Endothelial cell of umbilical vein (primary cell): ENCODE measurements at regions of chr21 and their contacts with region 1.

Region 1: GRCh38 chr21:32727687-32728455 is at the start of gene SYNJ1:
- DNase-seq: peak; percentile 98
- H3K4me3 ChIP-seq: peak within 1 kb of the TSS; percentile 45 to 87 (median 85)
- H3K27ac ChIP-seq: peak within 1 kb of the TSS; percentile 50
- H3K4me1 ChIP-seq: peaks cover 13% of the 10 kb centered on the region
- H3K27me3 ChIP-seq: no peaks in the 10 kb centered on the region
- CTCF ChIP-seq: no peak
- POLR2A ChIP-seq: peak; percentile 75
- total RNA-seq, gene SYNJ1: 17.0 and 18.3 TPM in 2 replicates

Region 2: GRCh38 chr21:32612075-32612998 is 115.5 kb before region 1 on chr21 and contains the start of gene CFAP298:
- CTCF ChIA-PET with region 1: interaction called, 7 read pairs
- POLR2A ChIA-PET with region 1: no interaction called
- dilution Hi-C with region 1: no loop called
- intact Hi-C with region 1: loop called (anchors 5 kb)
- DNase-seq: peak; percentile 92
- H3K4me3 ChIP-seq: peak within 1 kb of the TSS; percentile 74 to 99 (median 95)
- H3K27ac ChIP-seq: peak within 1 kb of the TSS; percentile 79
- H3K4me1 ChIP-seq: peaks cover 10% of the 10 kb centered on the region
- H3K27me3 ChIP-seq: no peaks in the 10 kb centered on the region
- CTCF ChIP-seq: no peak
- POLR2A ChIP-seq: peak; percentile 91
- total RNA-seq, gene CFAP298: 36.0 and 44.1 TPM in 2 replicates

Region 3: DNA sequence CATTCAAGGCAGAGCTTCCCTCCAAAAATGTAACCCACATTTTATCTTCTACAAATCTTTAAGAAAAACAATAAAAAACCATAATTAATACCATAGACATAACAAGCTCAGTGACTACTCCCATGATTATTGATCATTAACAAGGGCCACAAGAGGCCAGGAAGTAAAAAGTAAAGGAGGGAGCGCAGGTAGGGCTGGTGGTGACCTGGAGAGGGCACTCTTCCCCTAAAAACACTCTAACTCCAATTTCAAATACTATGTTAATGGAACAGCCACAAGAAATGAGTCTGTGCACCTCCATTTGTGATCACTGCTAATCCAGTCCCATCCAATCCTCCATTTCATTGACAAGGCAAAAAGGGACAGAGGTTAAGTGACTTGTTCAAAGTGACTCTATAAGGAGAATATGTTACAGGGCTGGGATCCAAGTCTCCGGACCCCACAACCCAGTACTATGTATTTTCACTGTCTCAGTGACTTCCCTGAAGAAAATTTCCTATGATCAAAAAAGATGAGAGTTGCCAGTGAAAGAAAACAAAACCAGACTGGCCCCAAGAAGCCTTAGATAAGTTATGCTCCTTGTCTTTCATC is 74.5 kb before region 1 on chr21:
- CTCF ChIA-PET with region 1: interaction called, 5 read pairs
- POLR2A ChIA-PET with region 1: no interaction called
- dilution Hi-C with region 1: no loop called
- intact Hi-C with region 1: loop called (anchors 1 kb)
- DNase-seq: peak; percentile 59
- H3K4me3 ChIP-seq: no peak overlapping the region
- H3K27ac ChIP-seq: no peak overlapping the region
- H3K4me1 ChIP-seq: no peaks in the 10 kb centered on the region
- H3K27me3 ChIP-seq: no peaks in the 10 kb centered on the region
- CTCF ChIP-seq: peak; percentile 54 to 69
- POLR2A ChIP-seq: no peak

Region 4: DNA sequence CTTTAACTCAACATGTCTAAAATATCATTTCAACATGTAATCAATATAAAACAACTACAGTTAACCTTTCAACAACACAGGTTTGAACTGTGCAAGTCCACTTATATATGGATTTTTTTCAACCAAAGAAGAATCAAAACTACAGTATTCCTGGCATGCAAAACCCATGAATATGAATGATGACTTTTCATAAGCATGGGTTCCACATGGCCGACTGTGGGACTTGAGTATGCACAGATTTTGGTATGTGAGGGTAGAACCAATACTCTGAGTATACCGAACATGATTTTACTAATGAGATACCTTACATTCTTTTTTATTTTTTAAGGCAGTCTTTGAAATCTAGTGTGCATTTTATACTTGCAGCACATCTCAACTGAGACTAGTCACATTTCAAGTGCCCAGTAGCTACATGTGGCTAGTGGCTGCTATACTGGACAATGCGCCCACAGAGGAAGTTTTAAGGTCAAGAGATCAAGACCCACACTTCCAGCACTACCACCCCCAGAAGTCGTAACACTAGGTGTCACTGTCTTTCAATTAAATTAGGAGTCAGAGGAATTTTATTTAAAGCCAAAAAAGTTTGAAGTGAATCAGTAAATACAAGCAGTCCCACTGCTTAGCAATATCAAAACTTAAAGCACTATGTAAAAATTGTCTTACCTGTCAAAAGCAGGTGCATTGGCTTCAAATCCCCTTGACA is 40.1 kb before region 1 on chr21:
- CTCF ChIA-PET with region 1: interaction called, 4 read pairs
- POLR2A ChIA-PET with region 1: no interaction called
- dilution Hi-C with region 1: no loop called
- intact Hi-C with region 1: loop called (anchors 1 kb)
- DNase-seq: peak; percentile 69
- H3K4me3 ChIP-seq: no peak overlapping the region
- H3K27ac ChIP-seq: no peak overlapping the region
- H3K4me1 ChIP-seq: peaks cover 7% of the 10 kb centered on the region
- H3K27me3 ChIP-seq: no peaks in the 10 kb centered on the region
- CTCF ChIP-seq: no peak
- POLR2A ChIP-seq: no peak

Region 5: GRCh38 chr21:32712043-32712442 is 15.8 kb before region 1 on chr21:
- CTCF ChIA-PET with region 1: interaction called, 22 read pairs
- POLR2A ChIA-PET with region 1: interaction called, 3 read pairs
- dilution Hi-C with region 1: no loop called
- intact Hi-C with region 1: loop called (anchors 1 kb)
- DNase-seq: no peak
- H3K4me3 ChIP-seq: no peak overlapping the region
- H3K27ac ChIP-seq: no peak overlapping the region
- H3K4me1 ChIP-seq: peaks cover 31% of the 10 kb centered on the region
- H3K27me3 ChIP-seq: no peaks in the 10 kb centered on the region
- CTCF ChIP-seq: no peak
- POLR2A ChIP-seq: no peak